ENCODE measurements at regions of chr2 and their contacts with region 1.

Region 1: GRCh38 chr2:71923887-71924533 is 223.7 kb downstream of the CYP26B1 start:
- DNase-seq: peak; percentile 66
- H3K4me3 ChIP-seq: no peak overlapping the region
- H3K27ac ChIP-seq: no peak overlapping the region
- H3K4me1 ChIP-seq: no peaks in the 10 kb centered on the region
- H3K27me3 ChIP-seq: no peaks in the 10 kb centered on the region
- CTCF ChIP-seq: peak; percentile 78 to 81
- POLR2A ChIP-seq: no peak

Region 2: DNA sequence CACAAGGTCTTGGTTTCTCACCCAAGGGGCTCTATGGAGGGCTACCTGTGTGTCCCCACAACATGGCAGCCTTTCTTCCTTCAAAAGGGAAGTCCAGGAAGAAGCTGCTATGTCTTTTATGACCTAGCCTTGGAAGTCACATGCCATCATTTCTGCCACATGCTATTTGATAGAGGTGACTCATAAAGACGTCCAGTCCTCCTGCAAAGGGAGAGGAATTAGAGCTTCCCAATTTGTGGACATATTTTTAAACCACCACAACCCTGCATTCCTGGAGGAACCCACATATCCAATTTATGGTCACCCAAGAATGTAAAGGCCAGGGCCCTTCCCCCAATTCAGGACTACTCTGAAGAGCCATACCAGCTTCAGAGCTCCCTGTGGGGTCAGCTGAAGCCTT is 22.5 kb before region 1 on chr2:
- CTCF ChIA-PET with region 1: interaction called, 12 read pairs
- POLR2A ChIA-PET with region 1: no interaction called
- dilution Hi-C with region 1: no loop called
- intact Hi-C with region 1: no loop called
- DNase-seq: no peak
- H3K4me3 ChIP-seq: no peak overlapping the region
- H3K27ac ChIP-seq: no peak overlapping the region
- H3K4me1 ChIP-seq: no peaks in the 10 kb centered on the region
- H3K27me3 ChIP-seq: peaks cover 13 to 29% of the 10 kb centered on the region in 2 experiments
- CTCF ChIP-seq: no peak
- POLR2A ChIP-seq: no peak

Region 3: GRCh38 chr2:71939588-71940535 is 15.9 kb after region 1 on chr2:
- CTCF ChIA-PET with region 1: interaction called, 76 read pairs
- POLR2A ChIA-PET with region 1: no interaction called
- dilution Hi-C with region 1: no loop called
- intact Hi-C with region 1: no loop called
- DNase-seq: no peak
- H3K4me3 ChIP-seq: no peak overlapping the region
- H3K27ac ChIP-seq: no peak overlapping the region
- H3K4me1 ChIP-seq: no peaks in the 10 kb centered on the region
- H3K27me3 ChIP-seq: peaks cover 2% of the 10 kb centered on the region in 2 experiments
- CTCF ChIP-seq: no peak
- POLR2A ChIP-seq: no peak

Region 4: GRCh38 chr2:72137498-72138010 is 213.5 kb after region 1 on chr2:
- CTCF ChIA-PET with region 1: interaction called, 10 read pairs
- POLR2A ChIA-PET with region 1: no interaction called
- dilution Hi-C with region 1: no loop called
- intact Hi-C with region 1: loop called (anchors 1 kb)
- DNase-seq: peak; percentile 49
- H3K4me3 ChIP-seq: no peak overlapping the region
- H3K27ac ChIP-seq: no peak overlapping the region
- H3K4me1 ChIP-seq: no peaks in the 10 kb centered on the region
- H3K27me3 ChIP-seq: peaks cover 2% of the 10 kb centered on the region in 2 experiments
- CTCF ChIP-seq: peak; percentile 88 to 94
- POLR2A ChIP-seq: no peak

Region 5: DNA sequence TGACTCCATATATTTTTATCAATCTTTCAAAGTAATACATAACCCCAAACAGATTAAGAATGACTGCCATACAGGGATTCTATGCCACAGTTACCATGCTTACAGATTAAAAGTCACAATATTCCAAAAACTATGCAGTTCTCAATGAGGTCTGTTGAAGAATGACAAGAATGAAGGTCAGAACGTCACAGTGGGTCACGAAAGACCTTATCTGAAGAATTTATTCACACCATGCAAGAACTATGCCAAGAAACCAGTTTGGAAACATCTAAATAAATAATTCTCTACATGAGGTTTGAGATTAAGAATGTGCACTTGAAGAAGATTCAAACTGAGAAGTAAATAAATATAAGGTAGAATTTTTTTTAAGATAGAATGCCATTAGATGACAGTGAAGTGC is 648.5 kb after region 1 on chr2:
- CTCF ChIA-PET with region 1: interaction called, 158 read pairs
- POLR2A ChIA-PET with region 1: no interaction called
- dilution Hi-C with region 1: no loop called
- intact Hi-C with region 1: no loop called
- DNase-seq: no peak
- H3K4me3 ChIP-seq: no peak overlapping the region
- H3K27ac ChIP-seq: no peak overlapping the region
- H3K4me1 ChIP-seq: no peaks in the 10 kb centered on the region
- H3K27me3 ChIP-seq: no peaks in the 10 kb centered on the region
- CTCF ChIP-seq: no peak
- POLR2A ChIP-seq: no peak

Region 6: GRCh38 chr2:72605836-72606442 is 681.9 kb after region 1 on chr2:
- CTCF ChIA-PET with region 1: interaction called, 39 read pairs
- POLR2A ChIA-PET with region 1: no interaction called
- dilution Hi-C with region 1: no loop called
- intact Hi-C with region 1: no loop called
- DNase-seq: peak; percentile 43
- H3K4me3 ChIP-seq: no peak overlapping the region
- H3K27ac ChIP-seq: no peak overlapping the region
- H3K4me1 ChIP-seq: no peaks in the 10 kb centered on the region
- H3K27me3 ChIP-seq: no peaks in the 10 kb centered on the region
- CTCF ChIP-seq: peak; percentile 38 to 43
- POLR2A ChIP-seq: no peak

Measured in endothelial cell of umbilical vein (primary cell).